Mammary epithelial cell (primary cell): ENCODE measurements at regions of chr12 and their contacts with region 1.

Region 1: GRCh38 chr12:13362260-13362841 is 165.8 kb downstream of the EMP1 start:
- DNase-seq: peak; percentile 62
- H3K4me3 ChIP-seq: no peak overlapping the region
- H3K27ac ChIP-seq: no peak overlapping the region
- H3K4me1 ChIP-seq: no peaks in the 10 kb centered on the region
- H3K27me3 ChIP-seq: peaks cover 3% of the 10 kb centered on the region
- CTCF ChIP-seq: peak; percentile 81 to 85

Region 2: DNA sequence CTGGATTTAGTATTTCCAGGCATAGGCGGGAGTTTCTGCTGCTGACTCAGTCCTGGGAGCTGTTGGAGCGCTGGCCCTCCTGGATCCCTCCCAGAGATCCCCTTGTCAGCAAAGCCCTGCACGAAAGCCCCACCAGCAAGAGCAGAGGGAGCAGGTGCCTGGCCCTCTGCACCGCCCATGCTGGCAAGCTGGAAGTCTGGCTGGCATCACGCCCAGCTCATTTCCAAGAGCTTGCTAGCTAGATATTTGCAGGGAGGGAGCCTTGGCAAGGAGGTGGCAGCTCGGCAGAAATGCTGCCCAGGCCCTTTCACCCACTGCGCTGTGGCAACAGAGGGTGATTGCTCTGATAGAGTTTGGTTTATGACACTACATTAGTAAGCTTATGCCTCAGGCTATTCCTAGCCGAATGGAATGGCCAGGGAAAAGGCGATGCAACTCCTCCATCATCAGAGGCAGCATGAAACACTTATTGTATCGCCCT is 28.1 kb after region 1 on chr12:
- CTCF ChIA-PET with region 1: interaction called, 10 read pairs
- dilution Hi-C with region 1: no loop called
- in situ Hi-C with region 1: no loop called
- intact Hi-C with region 1: no loop called
- DNase-seq: peak; percentile 92
- H3K4me3 ChIP-seq: no peak overlapping the region
- H3K27ac ChIP-seq: no peak overlapping the region
- H3K4me1 ChIP-seq: peaks cover 16% of the 10 kb centered on the region
- H3K27me3 ChIP-seq: peaks cover 3% of the 10 kb centered on the region
- CTCF ChIP-seq: no peak

Region 3: DNA sequence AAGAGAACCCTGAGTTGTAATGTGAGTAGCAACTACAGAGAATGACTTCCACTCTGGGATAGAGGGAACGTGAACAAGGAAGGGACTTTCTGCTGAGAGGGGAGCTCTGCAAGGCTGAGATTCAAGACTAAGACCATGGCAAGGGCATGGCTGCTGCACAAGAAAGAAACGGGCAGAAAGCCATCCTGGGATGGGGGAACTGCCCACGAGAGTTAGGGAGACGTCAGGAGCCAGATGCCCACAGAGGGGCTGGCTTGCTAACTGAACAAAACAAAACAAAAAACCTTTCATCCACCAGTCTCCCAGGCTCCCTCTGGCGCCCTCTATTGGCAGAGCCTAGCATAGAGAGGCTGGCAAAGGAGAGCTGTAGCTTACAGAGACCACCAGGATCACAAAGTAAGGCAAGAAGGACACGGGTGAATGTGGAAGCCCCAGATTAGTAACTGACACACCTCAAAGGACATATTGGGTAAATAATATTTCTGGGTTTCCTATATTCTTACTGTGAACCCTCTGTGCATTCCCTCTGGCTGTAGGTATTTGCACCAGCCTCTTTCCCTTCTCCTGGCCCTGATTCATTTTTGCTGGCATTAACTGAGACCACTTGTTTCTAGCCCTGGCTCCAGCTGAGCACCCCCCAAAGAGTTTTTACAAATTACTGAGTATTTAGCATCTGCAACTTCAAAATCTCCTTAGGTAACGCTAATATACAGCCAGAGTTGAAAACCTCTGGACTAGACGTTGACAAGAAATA is 172.5 kb after region 1 on chr12:
- CTCF ChIA-PET with region 1: interaction called, 9 read pairs
- dilution Hi-C with region 1: no loop called
- in situ Hi-C with region 1: loop called in 1 of 2 experiments (anchors 25 kb)
- intact Hi-C with region 1: loop called (anchors 1 kb)
- DNase-seq: peak; percentile 21
- H3K4me3 ChIP-seq: no peak overlapping the region
- H3K27ac ChIP-seq: no peak overlapping the region
- H3K4me1 ChIP-seq: no peaks in the 10 kb centered on the region
- H3K27me3 ChIP-seq: no peaks in the 10 kb centered on the region
- CTCF ChIP-seq: peak; percentile 98

Region 4: GRCh38 chr12:13582421-13582820 is 220.1 kb after region 1 on chr12:
- CTCF ChIA-PET with region 1: interaction called, 10 read pairs
- dilution Hi-C with region 1: no loop called
- in situ Hi-C with region 1: no loop called
- intact Hi-C with region 1: no loop called
- DNase-seq: no peak
- H3K4me3 ChIP-seq: no peak overlapping the region
- H3K27ac ChIP-seq: no peak overlapping the region
- H3K4me1 ChIP-seq: no peaks in the 10 kb centered on the region
- H3K27me3 ChIP-seq: no peaks in the 10 kb centered on the region
- CTCF ChIP-seq: no peak

Region 5: DNA sequence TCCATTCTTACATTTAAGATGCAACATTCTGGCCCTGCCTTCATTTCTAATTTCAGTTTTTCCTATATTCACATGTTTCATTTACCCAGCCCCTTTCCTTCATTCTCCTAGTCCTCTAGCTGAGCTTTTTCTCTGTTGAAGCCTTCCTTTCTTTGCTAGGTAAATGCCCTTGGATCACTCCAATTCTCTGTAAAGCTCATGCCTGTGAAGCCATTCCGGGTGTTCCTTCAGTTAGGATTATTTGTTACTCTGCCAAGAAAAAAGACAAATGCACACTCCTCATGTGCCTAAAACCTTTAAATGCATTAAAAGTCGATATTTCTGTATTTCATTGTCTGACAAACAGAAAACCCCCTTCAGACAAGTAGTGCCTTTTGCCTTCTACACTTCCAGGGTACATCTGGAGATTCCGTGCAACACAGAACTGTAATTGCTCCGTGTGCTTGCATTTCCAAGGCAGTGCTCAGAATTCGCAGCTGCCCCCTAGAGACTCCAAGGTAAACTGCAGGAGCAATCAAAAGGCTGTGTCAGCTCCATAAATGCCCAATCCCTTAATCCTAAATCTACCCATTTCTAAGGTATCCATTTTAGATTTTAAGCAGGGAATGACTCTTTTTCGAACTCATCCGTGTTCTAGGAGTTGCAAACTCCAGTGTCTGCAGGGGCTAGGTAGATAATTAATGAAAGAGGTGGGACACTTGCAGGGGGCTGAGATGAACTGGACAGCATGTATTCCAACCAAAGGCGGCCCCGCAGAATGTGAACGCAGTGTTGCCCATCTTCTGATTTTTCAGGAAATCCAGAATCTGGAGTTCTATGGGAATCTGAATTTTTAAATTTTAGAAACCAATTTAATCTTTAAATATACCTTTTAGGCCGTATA is 298.9 kb after region 1 on chr12:
- CTCF ChIA-PET with region 1: no interaction called
- dilution Hi-C with region 1: no loop called
- in situ Hi-C with region 1: no loop called
- intact Hi-C with region 1: loop called (anchors 1 kb)
- DNase-seq: peak; percentile 30
- H3K4me3 ChIP-seq: no peak overlapping the region
- H3K27ac ChIP-seq: no peak overlapping the region
- H3K4me1 ChIP-seq: no peaks in the 10 kb centered on the region
- H3K27me3 ChIP-seq: no peaks in the 10 kb centered on the region
- CTCF ChIP-seq: peak; percentile 93 to 95